ENCODE measurements at regions of chr16 and their contacts with region 1.

Region 1: GRCh38 chr16:67561824-67562525 is 351 bp upstream of the CTCF start:
- DNase-seq: peak; percentile 98
- H3K4me3 ChIP-seq: peak overlapping the region; percentile 73 to 75
- H3K27ac ChIP-seq: peak overlapping the region; percentile 96
- H3K4me1 ChIP-seq: peaks cover 0 to 13% of the 10 kb centered on the region in 2 experiments; a peak in 2 of 4 replicates
- H3K27me3 ChIP-seq: no peaks in the 10 kb centered on the region
- CTCF ChIP-seq: no peak
- EP300 ChIP-seq: peak in 1 of 2 experiments; percentile 9; a peak in 1 of 4 replicates
- RAD21 ChIP-seq: no peak

Region 2: DNA sequence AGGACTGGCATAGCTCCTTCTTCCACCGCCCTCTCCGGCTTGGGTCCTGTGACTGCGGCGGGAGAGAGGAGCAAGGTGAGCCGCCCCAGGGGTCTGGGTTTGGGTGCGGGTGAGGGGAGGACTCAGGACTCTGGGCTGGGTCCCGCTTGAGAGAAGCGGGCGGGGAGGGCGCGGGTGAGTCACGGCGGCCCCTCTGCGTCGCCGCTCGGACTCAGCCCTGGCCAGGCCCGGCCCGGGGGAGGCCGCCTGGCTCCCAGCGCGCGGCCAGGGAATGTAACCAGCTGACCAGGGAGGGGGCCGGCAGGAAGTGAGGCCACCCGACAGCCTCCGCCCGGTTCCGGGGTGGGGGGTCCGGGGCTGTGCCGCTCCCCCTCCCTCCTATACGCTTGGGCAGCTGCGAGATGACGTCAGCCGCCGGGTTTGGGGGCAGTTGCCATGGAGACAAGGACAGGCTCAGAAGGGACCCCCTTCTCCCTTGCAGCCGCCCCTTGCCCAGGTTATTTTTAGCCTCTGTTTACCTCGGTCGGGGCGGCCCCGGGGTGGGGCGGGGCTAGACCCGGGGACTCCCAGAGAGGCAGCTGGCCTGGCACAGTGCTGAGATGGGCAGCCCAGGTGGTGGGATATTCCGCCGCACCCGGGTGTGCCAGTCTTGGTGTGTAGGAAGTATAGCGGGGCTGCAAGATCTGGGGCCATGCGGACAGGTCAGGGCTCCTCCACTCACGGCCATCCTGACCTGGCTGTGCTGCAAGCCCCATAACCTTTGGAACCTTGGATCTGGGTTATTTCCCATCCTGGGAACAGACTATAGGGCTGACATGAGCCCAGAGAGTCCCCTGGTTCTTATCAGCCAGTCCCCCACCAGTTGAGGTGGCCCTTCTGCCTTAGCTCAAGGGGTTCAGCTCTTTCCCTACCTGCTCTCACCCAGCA is 31.7 kb before region 1 on chr16:
- CTCF ChIA-PET with region 1: interaction called, 19 read pairs
- POLR2A ChIA-PET with region 1: interaction called, 7 read pairs
- DNase-seq: peak; percentile 89
- H3K4me3 ChIP-seq: peak overlapping the region; percentile 77 to 99
- H3K27ac ChIP-seq: peak overlapping the region; percentile 83; a peak in 3 of 4 replicates
- H3K4me1 ChIP-seq: peaks cover 21% of the 10 kb centered on the region in 2 experiments; a peak in 3 of 4 replicates
- H3K27me3 ChIP-seq: no peaks in the 10 kb centered on the region
- CTCF ChIP-seq: no peak
- EP300 ChIP-seq: 0 out of 4 replicates have a peak, but pooled peaks of 1 of the 2 experiments have one; percentile 6
- RAD21 ChIP-seq: no peak

Region 3: DNA sequence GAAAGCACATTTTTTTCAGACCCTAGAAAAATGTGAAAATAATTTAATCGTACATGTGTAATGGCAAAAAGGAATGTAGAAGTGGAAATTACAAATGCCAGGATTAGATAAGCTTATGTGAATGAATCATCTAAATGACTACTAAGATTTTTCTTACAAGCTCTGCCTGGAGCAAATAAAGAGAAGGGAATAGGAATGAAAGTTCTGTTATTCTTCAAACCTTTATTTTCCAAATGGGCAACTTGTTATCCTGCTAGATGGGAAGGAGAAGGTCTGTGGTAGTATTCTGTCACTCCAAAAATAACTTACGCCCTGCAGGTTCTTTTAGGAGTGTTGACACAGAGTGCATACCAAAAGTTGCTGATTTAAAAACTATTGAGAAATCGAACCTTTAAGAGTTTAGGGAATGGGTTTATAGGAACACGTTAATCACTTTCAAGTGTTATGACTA is 10.0 kb after region 1 on chr16:
- CTCF ChIA-PET with region 1: interaction called, 21 read pairs
- POLR2A ChIA-PET with region 1: no interaction called
- DNase-seq: no peak
- H3K4me3 ChIP-seq: peak overlapping the region in 1 of 2 experiments; percentile 9; a peak in 1 of 4 replicates
- H3K27ac ChIP-seq: peak overlapping the region; percentile 54 to 88; a peak in 3 of 4 replicates
- H3K4me1 ChIP-seq: peaks cover 0 to 14% of the 10 kb centered on the region in 2 experiments; a peak in 2 of 4 replicates
- H3K27me3 ChIP-seq: no peaks in the 10 kb centered on the region
- CTCF ChIP-seq: no peak
- EP300 ChIP-seq: no peak
- RAD21 ChIP-seq: no peak

Region 4: DNA sequence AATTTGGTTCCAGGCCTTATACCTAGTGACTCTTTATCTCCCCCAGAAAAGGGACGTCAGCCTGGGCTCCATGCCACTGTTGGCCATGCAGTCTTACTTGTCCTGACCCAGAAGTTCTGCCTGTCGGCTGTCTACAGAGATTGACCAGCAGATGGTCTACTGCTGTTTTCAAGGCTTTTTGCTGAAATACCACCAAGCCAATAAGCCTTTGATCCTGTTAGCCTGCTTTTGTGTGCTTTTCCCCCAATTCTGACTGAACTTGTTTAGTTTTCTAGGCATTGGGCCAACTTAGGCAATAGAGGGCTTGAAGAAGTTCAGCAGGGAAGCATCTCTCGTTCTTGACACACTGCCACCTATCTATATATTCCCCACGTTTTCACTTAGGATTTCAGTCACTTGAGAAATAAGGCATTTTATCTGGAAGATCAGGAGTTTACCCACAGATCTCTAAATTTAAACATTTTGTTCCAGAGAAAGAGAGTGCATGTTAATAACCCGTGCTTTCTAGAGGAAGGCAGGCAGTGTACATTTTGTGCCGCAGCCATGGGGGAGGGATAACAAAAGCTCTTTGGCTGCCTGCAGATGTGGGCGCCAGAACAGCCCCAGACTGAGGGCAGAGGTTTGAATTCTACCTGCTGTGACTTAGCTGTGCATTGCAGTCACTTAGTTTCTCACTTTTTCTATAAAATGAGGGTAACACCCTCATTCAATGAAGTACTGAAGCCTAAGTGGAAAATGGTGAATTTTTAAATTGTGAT is 70.6 kb after region 1 on chr16:
- CTCF ChIA-PET with region 1: interaction called, 263 read pairs
- POLR2A ChIA-PET with region 1: no interaction called
- DNase-seq: no peak
- H3K4me3 ChIP-seq: no peak overlapping the region
- H3K27ac ChIP-seq: no peak overlapping the region
- H3K4me1 ChIP-seq: no peaks in the 10 kb centered on the region
- H3K27me3 ChIP-seq: no peaks in the 10 kb centered on the region
- CTCF ChIP-seq: no peak
- EP300 ChIP-seq: no peak
- RAD21 ChIP-seq: no peak

Region 5: DNA sequence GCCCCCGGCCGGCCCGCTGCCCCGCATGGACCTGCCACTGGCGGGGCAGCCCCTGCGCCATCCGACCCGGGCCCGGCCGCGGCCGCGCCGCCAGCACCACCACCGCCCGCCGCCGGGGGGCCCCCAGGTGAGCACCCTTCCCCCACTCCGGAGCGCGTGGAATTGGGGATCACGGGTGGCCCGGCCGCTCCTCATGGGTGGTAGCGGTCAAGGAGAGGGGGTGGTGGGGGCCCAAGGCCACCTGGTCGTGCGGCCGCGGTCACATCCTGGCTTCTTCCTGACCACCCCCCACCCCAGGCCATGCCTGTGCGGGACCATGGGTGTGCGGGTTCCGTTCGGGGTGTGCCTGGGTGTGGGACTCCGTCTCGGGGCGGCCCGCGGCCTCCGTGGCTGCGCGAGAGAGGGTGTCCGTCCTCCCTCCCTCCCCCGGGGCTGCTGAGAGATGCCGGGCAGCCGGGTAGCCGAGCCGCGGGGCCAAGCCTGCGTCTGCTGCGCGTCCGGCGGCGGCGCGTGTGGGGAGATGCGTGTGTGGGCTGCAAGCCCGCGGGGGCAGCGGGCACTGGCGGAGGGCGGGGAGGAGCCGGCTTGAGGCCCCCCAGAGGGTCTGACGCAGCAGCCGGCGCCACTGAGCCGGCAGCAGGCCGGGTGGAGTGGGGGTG is 91.3 kb after region 1 on chr16:
- CTCF ChIA-PET with region 1: interaction called, 263 read pairs
- POLR2A ChIA-PET with region 1: no interaction called
- DNase-seq: peak; percentile 89
- H3K4me3 ChIP-seq: peak overlapping the region; percentile 64 to 82
- H3K27ac ChIP-seq: peak overlapping the region in 1 of 2 experiments; percentile 64; a peak in 1 of 4 replicates
- H3K4me1 ChIP-seq: peaks cover 0 to 10% of the 10 kb centered on the region in 2 experiments; a peak in 1 of 4 replicates
- H3K27me3 ChIP-seq: no peaks in the 10 kb centered on the region
- CTCF ChIP-seq: peak; percentile 42; the same call in 1 of the 2 replicates
- EP300 ChIP-seq: no peak
- RAD21 ChIP-seq: no peak

Region 6: GRCh38 chr16:67672739-67673662 is 111.0 kb after region 1 on chr16:
- CTCF ChIA-PET with region 1: interaction called, 48 read pairs
- POLR2A ChIA-PET with region 1: interaction called, 11 read pairs
- DNase-seq: peak; percentile 84
- H3K4me3 ChIP-seq: no peak overlapping the region; a peak in 1 of 4 replicates
- H3K27ac ChIP-seq: peak overlapping the region; percentile 32 to 69; a peak in 3 of 4 replicates
- H3K4me1 ChIP-seq: peaks cover 15 to 31% of the 10 kb centered on the region in 2 experiments; a peak in 2 of 4 replicates
- H3K27me3 ChIP-seq: no peaks in the 10 kb centered on the region
- CTCF ChIP-seq: peak; percentile 76
- EP300 ChIP-seq: no peak
- RAD21 ChIP-seq: peak; percentile 82